ENCODE measurements at regions of chr2 and their contacts with region 1.

Region 1: DNA sequence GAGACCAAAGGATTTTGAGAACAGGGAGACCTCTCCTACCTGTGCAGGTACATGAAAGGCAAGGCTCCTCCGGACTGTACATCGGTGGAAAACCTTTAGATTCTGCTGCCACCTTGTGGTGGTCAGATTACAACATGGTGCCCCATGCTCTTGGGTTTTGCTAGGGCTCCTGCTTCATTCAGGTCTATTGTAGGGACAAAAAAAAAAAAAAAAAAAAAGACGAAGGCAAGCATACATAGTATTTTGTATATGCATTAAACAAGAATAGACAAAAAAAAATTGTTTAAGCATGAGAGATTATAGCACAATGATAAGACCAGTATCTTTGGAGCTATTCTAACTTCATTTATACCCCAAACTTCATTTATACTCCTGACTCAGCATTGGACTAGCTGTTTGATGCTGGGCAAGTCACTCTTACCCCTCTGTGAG is 27.4 kb upstream of the SPR start:
- DNase-seq: peak in 5 of 6 donors; percentile 56 to 83 (median 60)
- ATAC-seq: peak; percentile 81 to 88 (median 87)
- H3K4me3 ChIP-seq: no peak overlapping the region
- H3K27ac ChIP-seq: no peak overlapping the region
- H3K4me1 ChIP-seq: no peaks in the 10 kb centered on the region
- H3K27me3 ChIP-seq: no peaks in the 10 kb centered on the region
- CTCF ChIP-seq: peak; percentile 21 to 49 (median 44)

Region 2: DNA sequence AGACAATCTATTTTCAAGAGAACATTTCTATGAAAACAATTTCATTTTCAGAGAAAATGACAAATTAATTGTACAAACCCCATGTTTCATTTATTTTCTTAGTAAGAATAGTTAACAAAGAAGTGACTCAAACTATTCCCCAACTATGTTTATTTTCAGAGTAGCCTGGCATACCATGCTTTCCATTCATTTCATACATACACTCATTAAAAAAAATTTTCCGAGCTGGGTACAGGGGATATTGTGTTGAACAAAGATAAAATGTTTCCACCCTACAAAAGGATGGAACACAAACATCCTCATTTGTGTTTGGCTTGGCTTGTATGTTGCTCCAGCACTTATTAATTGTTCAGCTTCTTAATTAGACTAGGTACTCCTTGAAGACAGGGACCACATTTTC is 365.5 kb before region 1 on chr2:
- intact Hi-C with region 1: no loop called
- DNase-seq: no peak
- ATAC-seq: no peak
- H3K4me3 ChIP-seq: no peak overlapping the region
- H3K27ac ChIP-seq: no peak overlapping the region
- H3K4me1 ChIP-seq: no peaks in the 10 kb centered on the region
- H3K27me3 ChIP-seq: no peaks in the 10 kb centered on the region
- CTCF ChIP-seq: no peak

Region 3: GRCh38 chr2:72770879-72771461 is 88.9 kb before region 1 on chr2:
- intact Hi-C with region 1: loop called in 1 of 3 experiments (anchors 5 kb)
- DNase-seq: peak in 3 of 6 donors; percentile 47 to 61 (median 48)
- ATAC-seq: peak in 3 of 4 donors; percentile 81 to 92 (median 84)
- H3K4me3 ChIP-seq: no peak overlapping the region
- H3K27ac ChIP-seq: no peak overlapping the region
- H3K4me1 ChIP-seq: no peaks in the 10 kb centered on the region
- H3K27me3 ChIP-seq: no peaks in the 10 kb centered on the region
- CTCF ChIP-seq: peak; percentile 52 to 72 (median 69)

Region 4: DNA sequence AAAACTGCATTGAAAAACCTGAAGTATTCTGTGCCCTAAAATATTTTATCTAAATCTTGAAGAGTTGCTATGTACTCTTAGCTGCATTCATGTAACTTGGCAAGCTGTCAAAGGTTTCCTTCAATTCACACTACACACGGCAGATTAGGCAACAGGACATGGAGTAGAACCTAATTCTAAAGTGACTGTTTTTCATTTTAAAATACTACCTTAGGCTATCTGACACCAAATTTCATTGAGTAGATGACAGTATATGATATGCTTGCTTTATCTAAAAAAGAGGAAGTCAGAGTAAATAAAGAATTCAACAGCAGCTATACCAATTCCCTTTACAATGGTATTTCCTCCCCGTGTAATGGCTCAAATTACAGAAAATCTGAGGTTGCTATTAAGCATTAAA is 79.4 kb before region 1 on chr2:
- intact Hi-C with region 1: loop called in 1 of 3 experiments (anchors 10 kb)
- DNase-seq: no peak
- ATAC-seq: peak; percentile 56 to 80 (median 66)
- H3K4me3 ChIP-seq: no peak overlapping the region
- H3K27ac ChIP-seq: no peak overlapping the region
- H3K4me1 ChIP-seq: peaks cover 6 to 10% (median 10%) of the 10 kb centered on the region in 3 donors
- H3K27me3 ChIP-seq: no peaks in the 10 kb centered on the region
- CTCF ChIP-seq: no peak